B cell (primary cell): ENCODE measurements at regions of chr1 and their contacts with region 1.

Region 1: DNA sequence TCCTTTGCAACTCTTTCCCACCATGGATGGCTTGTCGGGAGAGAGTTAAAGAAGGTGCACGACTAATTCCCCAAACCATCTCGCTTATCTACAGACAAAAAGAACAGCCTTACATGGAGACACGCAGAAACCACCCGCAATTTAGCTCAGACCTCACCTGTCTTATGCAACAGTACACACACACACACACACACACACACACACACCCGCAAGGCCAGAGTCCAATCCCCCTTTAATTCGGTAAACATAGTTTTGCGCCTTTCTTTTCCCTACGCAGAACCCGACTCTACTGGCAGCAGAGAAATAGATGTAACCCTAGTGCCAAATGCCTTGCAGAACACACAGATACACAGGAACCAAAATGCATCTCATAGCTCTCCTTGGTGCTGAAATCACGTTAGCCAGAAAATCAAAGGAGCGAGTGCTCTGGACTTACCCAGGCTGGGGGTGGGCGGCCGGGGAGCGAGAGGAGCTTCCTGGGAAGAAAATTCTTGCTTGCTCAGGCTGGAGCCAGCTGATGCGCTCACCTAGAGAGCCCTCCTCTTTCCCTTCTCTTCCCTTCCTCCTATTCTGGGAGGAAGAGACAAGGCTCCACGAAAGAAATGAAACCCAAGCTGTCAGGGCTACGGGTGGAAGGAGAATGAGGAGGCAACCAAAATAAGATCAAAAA is 470 bp downstream of the TNR start:
- DNase-seq: peak; percentile 5
- ATAC-seq: no peak
- H3K4me3 ChIP-seq: no peak overlapping the region
- H3K4me3 Mint-ChIP-seq: no peak overlapping the region
- H3K27ac ChIP-seq: no peak overlapping the region
- H3K27ac Mint-ChIP-seq: no peak overlapping the region
- H3K4me1 ChIP-seq: peaks cover 0 to 4% of the 10 kb centered on the region in 2 donors
- H3K4me1 Mint-ChIP-seq: peaks cover 3% of the 10 kb centered on the region
- H3K27me3 ChIP-seq: peaks cover 0 to 19% (median 1%) of the 10 kb centered on the region in 4 experiments
- H3K27me3 Mint-ChIP-seq: peaks cover 38% of the 10 kb centered on the region
- CTCF ChIP-seq: no peak

Region 2: DNA sequence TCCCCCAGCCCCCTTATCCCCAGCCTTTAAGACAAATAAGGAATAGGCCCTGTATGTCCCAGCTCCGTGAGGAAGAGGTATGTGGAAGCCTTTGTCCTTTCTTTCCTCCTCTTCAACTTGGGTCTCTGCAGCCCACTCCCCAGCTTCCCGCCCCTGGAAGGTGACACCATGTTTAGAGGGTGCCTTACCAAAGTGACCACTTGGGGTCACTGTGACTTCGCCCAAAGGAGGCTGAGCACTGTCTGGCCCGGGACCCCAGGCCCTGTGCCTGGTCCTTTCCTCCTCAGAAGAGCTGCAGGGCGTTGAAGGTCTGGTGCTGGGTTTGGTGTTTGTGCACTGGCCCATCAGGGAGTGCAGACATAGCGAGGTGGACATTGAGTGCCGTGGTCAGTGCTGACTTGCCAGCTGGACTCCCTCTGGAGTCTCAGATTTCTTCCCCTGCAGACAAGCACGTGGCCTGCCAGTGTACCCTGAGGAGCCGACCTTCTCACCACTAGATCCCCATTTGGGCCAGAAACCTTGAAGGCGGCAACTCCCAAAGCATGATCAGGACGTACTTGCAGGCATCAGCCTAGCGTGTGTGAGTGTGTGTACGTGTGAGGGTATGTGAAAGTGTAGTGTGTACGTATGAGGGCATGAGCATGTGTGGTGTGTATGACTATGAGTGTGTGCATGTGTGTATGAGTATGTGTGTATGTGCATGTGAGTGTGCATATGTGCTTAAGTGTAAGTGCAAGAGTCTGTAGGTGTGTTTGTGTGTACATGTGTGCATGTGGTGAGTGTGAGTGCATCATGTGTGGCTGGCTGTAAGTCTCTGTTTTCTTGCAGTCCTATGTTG is 368.9 kb before region 1 on chr1:
- CTCF ChIA-PET with region 1: interaction called, 6 read pairs
- POLR2A ChIA-PET with region 1: no interaction called
- intact Hi-C with region 1: loop called (anchors 10 kb)
- DNase-seq: peak; percentile 41
- ATAC-seq: no peak
- H3K4me3 ChIP-seq: no peak overlapping the region
- H3K4me3 Mint-ChIP-seq: no peak overlapping the region
- H3K27ac ChIP-seq: no peak overlapping the region
- H3K27ac Mint-ChIP-seq: no peak overlapping the region
- H3K4me1 ChIP-seq: no peaks in the 10 kb centered on the region
- H3K4me1 Mint-ChIP-seq: no peaks in the 10 kb centered on the region
- H3K27me3 ChIP-seq: no peaks in the 10 kb centered on the region
- H3K27me3 Mint-ChIP-seq: peaks cover 2% of the 10 kb centered on the region
- CTCF ChIP-seq: peak; percentile 71

Region 3: GRCh38 chr1:175481126-175482066 is 261.5 kb before region 1 on chr1:
- CTCF ChIA-PET with region 1: interaction called, 16 read pairs
- POLR2A ChIA-PET with region 1: no interaction called
- intact Hi-C with region 1: loop called (anchors 1 kb)
- DNase-seq: peak; percentile 51
- ATAC-seq: no peak
- H3K4me3 ChIP-seq: no peak overlapping the region
- H3K4me3 Mint-ChIP-seq: no peak overlapping the region
- H3K27ac ChIP-seq: no peak overlapping the region
- H3K27ac Mint-ChIP-seq: no peak overlapping the region
- H3K4me1 ChIP-seq: no peaks in the 10 kb centered on the region
- H3K4me1 Mint-ChIP-seq: peaks cover 2% of the 10 kb centered on the region
- H3K27me3 ChIP-seq: peaks cover 0 to 3% (median 2%) of the 10 kb centered on the region in 4 experiments
- H3K27me3 Mint-ChIP-seq: peaks cover 10% of the 10 kb centered on the region
- CTCF ChIP-seq: peak; percentile 76

Region 4: GRCh38 chr1:175591083-175591743 is 151.7 kb before region 1 on chr1:
- CTCF ChIA-PET with region 1: no interaction called
- POLR2A ChIA-PET with region 1: no interaction called
- intact Hi-C with region 1: no loop called
- DNase-seq: no peak
- ATAC-seq: no peak
- H3K4me3 ChIP-seq: no peak overlapping the region
- H3K4me3 Mint-ChIP-seq: no peak overlapping the region
- H3K27ac ChIP-seq: no peak overlapping the region
- H3K27ac Mint-ChIP-seq: no peak overlapping the region
- H3K4me1 ChIP-seq: no peaks in the 10 kb centered on the region
- H3K4me1 Mint-ChIP-seq: peaks cover 2% of the 10 kb centered on the region
- H3K27me3 ChIP-seq: peaks cover 0 to 6% (median 0%) of the 10 kb centered on the region in 4 experiments
- H3K27me3 Mint-ChIP-seq: peaks cover 14% of the 10 kb centered on the region
- CTCF ChIP-seq: no peak

Region 5: DNA sequence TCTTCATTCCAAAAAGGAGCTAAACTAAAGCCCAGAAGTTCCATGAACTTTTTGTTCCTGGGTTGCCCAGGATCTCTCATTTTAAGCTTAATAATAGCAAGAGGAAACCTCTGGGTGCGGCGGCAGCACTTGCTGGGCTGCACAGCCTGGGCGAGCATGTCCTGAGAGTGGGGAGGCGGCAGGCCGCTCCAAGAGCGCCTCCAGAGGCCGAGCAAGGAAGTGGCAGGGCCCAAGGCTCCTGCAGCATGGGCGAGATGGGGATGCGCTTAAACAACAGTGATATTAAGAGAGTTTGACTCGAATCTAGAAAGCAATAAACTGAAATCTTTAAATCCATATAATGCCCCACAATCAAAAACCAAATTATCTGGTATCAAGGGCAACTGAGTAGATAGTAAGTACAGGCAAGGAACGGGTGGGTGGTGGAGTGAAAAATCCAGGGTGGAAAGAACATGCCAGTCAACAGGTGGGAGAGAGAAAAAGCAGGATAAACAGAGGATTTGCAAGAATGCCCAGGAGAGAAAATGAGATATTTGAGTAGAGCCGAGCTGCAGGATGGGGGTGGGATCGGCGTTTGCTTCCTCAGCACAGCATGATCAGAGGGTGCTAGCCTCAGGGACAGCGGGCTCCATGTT is 14.6 kb after region 1 on chr1:
- CTCF ChIA-PET with region 1: interaction called, 14 read pairs
- POLR2A ChIA-PET with region 1: no interaction called
- intact Hi-C with region 1: no loop called
- DNase-seq: peak; percentile 25
- ATAC-seq: no peak
- H3K4me3 ChIP-seq: no peak overlapping the region
- H3K4me3 Mint-ChIP-seq: no peak overlapping the region
- H3K27ac ChIP-seq: no peak overlapping the region
- H3K27ac Mint-ChIP-seq: no peak overlapping the region
- H3K4me1 ChIP-seq: no peaks in the 10 kb centered on the region
- H3K4me1 Mint-ChIP-seq: no peaks in the 10 kb centered on the region
- H3K27me3 ChIP-seq: peaks cover 0 to 5% (median 0%) of the 10 kb centered on the region in 4 experiments
- H3K27me3 Mint-ChIP-seq: peaks cover 11% of the 10 kb centered on the region
- CTCF ChIP-seq: peak; percentile 74

Region 6: GRCh38 chr1:175900171-175900570 is 157.2 kb after region 1 on chr1:
- CTCF ChIA-PET with region 1: no interaction called
- POLR2A ChIA-PET with region 1: no interaction called
- intact Hi-C with region 1: no loop called
- DNase-seq: no peak
- ATAC-seq: no peak
- H3K4me3 ChIP-seq: no peak overlapping the region
- H3K4me3 Mint-ChIP-seq: no peak overlapping the region
- H3K27ac ChIP-seq: no peak overlapping the region
- H3K27ac Mint-ChIP-seq: no peak overlapping the region
- H3K4me1 ChIP-seq: no peaks in the 10 kb centered on the region
- H3K4me1 Mint-ChIP-seq: no peaks in the 10 kb centered on the region
- H3K27me3 ChIP-seq: no peaks in the 10 kb centered on the region
- H3K27me3 Mint-ChIP-seq: no peaks in the 10 kb centered on the region
- CTCF ChIP-seq: no peak

Region 7: DNA sequence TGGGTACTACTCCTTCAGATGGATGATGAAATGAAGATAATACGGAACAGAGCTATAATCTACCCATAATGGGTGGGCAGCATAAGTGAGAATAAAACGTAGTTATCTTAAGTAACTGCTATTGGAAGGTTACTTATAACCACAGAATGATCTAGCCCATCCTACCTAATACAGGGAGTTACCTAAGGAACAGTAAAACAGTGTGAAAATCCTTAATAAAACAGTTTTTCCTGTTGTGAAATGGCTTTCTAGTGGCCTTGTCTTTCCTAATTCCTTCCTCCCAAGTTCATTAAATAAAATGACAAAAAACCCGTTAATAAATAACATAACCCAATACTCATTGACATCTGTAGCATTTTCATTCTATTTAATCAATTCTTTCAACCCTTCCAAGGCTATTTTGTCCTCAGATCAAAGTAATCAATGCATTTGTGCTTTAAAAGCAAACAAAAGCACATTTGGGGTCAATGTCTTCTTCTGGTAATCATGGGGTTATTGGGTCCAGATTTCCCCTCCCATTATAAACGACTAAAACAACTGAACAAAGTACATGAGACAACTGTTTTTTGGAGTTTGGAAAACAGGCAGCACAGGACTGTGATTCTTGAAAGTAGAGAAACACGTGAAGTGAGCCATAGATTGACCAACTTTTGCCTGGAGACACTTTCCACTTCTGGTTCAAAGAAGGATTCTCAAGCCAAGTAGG is 762.1 kb after region 1 on chr1:
- CTCF ChIA-PET with region 1: no interaction called
- POLR2A ChIA-PET with region 1: no interaction called
- intact Hi-C with region 1: no loop called
- DNase-seq: no peak
- ATAC-seq: no peak
- H3K4me3 ChIP-seq: no peak overlapping the region
- H3K4me3 Mint-ChIP-seq: no peak overlapping the region
- H3K27ac ChIP-seq: no peak overlapping the region
- H3K27ac Mint-ChIP-seq: no peak overlapping the region
- H3K4me1 ChIP-seq: no peaks in the 10 kb centered on the region
- H3K4me1 Mint-ChIP-seq: no peaks in the 10 kb centered on the region
- H3K27me3 ChIP-seq: peaks cover 0 to 7% (median 0%) of the 10 kb centered on the region in 4 experiments
- H3K27me3 Mint-ChIP-seq: peaks cover 29% of the 10 kb centered on the region
- CTCF ChIP-seq: no peak